Gastrocnemius medialis (tissue), 4 donors: ENCODE measurements at regions of chr17 and their contacts with region 1.

Region 1: GRCh38 chr17:37744961-37745800 is at the start of gene HNF1B:
- DNase-seq: no peak
- ATAC-seq: no peak
- H3K4me3 ChIP-seq: peak within 1 kb of the TSS in 1 of 4 donors; percentile 44
- H3K27ac ChIP-seq: no peak within 1 kb of the TSS
- H3K4me1 ChIP-seq: peaks cover 15 to 22% of the 10 kb centered on the region in 2 donors
- H3K27me3 ChIP-seq: peaks cover 65 to 77% (median 76%) of the 10 kb centered on the region in 3 donors
- CTCF ChIP-seq: no peak
- POLR2A ChIP-seq: no peak
- total RNA-seq, gene HNF1B: not detected

Region 2: DNA sequence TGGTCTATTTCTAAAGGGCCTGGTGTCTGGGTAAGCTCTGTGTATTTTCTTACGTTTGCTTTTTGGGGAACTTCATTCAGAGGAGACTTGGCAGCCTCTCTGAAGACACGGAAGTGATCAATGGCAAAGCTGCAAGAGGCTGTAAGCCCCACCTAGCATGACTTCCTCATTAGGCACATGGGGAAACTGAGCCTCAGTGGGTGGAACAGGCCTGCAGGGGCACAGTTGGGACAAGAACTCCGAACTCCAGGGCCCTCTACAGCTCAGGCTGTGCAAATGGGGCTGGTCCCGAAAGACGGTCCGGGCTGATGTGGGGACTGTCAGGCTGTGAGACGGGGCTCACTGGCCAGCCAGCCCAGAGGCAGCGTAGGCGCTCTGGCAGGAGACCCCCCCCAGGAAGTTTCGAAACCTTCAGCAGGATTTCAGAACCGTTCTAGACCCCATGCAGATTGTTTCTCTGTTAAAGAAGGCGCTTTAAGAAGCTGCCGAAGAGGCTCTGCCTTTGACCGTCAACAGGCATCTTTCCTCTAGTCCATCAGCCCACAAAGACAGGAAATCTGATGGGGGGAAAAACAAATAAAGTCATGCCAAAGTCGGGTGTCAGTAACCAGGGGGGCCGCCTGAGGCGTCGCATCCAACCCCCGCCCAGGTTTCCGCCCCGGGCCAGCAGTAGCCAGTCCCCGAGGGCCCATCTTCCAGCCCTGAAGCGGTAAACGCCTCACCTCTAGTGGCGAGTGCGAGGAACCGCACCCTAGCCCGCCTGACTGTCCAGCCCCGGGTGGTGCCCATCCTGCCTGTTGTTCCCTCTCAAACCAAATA is 99.2 kb after region 1 on chr17:
- in situ Hi-C with region 1: loop called in 1 of 4 experiments (anchors 25 kb)
- intact Hi-C with region 1: no loop called
- DNase-seq: no peak
- ATAC-seq: no peak
- H3K4me3 ChIP-seq: peak overlapping the region in 1 of 4 donors; percentile 5
- H3K27ac ChIP-seq: no peak overlapping the region
- H3K4me1 ChIP-seq: no peaks in the 10 kb centered on the region
- H3K27me3 ChIP-seq: peaks cover 6 to 13% (median 9%) of the 10 kb centered on the region in 3 donors
- CTCF ChIP-seq: peak in 4 of 5 experiments; percentile 37 to 71 (median 47)
- POLR2A ChIP-seq: no peak